Astrocyte of the cerebellum (primary cell): ENCODE measurements at regions of chr2 and their contacts with region 1.

Region 1: DNA sequence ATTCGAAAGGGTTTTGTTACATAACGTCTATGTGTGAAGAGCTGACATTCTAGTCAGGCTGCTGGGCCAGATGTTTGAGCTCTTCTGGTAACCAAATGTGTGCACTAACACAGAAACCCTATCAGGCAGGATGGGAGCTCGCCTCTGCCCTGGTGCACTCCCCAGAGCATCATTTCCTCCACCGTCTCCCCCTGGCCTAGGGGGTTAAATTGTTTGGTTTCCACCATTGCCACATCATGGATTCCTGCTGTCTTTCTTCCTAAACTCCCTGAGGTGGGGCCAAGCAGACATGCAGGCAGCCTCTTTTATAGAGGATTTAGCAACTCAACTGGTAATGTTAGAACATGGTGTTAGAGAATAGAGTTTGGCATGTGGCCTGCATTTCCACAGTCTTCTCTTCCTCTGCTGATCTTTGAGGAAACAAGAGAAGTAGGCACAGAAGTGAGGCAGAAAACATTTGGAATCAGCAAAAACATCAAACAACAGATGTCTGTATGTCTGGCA is 87.3 kb downstream of the ANTXR1 start:
- DNase-seq: no peak
- H3K4me3 ChIP-seq: no peak overlapping the region
- CTCF ChIP-seq: no peak

Region 2: GRCh38 chr2:69012310-69013141 is 87.7 kb before region 1 on chr2:
- in situ Hi-C with region 1: loop called (anchors 25 kb)
- DNase-seq: no peak
- H3K4me3 ChIP-seq: peak overlapping the region; percentile 82
- CTCF ChIP-seq: peak; percentile 82